ENCODE measurements at regions of chr9 and their contacts with region 1.

Region 1: DNA sequence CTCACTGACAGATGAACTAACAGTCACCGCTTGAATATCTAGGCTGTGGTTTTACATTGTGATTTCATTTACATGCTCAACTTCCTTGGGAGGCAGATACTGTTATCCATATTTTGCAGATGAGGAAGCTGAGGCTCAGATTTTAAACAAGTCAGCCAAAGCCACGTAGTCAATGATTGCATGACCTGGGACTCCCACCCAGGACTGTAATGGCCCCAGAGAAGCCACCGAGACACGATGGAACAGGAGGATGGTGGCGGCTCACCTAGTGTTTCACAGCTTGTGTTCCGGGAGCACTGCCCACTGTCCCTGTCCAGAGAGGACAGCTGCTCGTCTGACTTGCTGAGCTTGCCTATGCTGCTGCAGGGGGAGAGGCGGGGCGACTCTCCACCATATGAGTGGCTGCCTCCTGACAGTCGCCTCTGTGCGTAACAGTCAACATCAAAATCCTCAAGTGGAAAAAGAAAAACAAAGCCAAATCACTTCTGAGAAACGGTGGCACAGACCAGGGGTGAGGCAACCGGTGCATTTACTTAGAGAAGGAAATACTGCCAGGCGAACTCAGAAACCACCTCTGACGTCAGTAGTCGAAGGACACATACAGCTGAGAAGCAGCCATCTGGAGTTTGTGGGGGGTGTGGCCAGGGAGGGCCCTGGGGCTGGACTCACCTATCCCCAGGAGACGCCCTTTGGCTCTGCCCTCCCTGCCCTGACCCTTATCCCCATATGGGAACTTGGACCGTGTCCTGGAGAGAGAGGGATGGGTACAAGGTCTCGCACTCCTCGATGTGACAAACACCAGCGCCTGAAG is 82.5 kb downstream of the PRRT1B start:
- DNase-seq: peak; percentile 93
- ATAC-seq: peak; percentile 84
- H3K4me3 Mint-ChIP-seq: peak overlapping the region; percentile 53
- H3K27ac Mint-ChIP-seq: peak overlapping the region; percentile 91
- H3K4me1 Mint-ChIP-seq: peaks cover 82% of the 10 kb centered on the region
- H3K27me3 Mint-ChIP-seq: no peaks in the 10 kb centered on the region

Region 2: GRCh38 chr9:131645078-131645776 is 17.4 kb after region 1 on chr9:
- CTCF ChIA-PET with region 1: interaction called, 24 read pairs
- DNase-seq: peak; percentile 58
- ATAC-seq: peak; percentile 53
- H3K4me3 Mint-ChIP-seq: no peak overlapping the region
- H3K27ac Mint-ChIP-seq: peak overlapping the region; percentile 80
- H3K4me1 Mint-ChIP-seq: peaks cover 58% of the 10 kb centered on the region
- H3K27me3 Mint-ChIP-seq: no peaks in the 10 kb centered on the region

Region 3: GRCh38 chr9:131668439-131669268 is 40.8 kb after region 1 on chr9:
- CTCF ChIA-PET with region 1: interaction called, 13 read pairs
- DNase-seq: peak; percentile 82
- ATAC-seq: peak; percentile 68
- H3K4me3 Mint-ChIP-seq: peak overlapping the region; percentile 60
- H3K27ac Mint-ChIP-seq: peak overlapping the region; percentile 99
- H3K4me1 Mint-ChIP-seq: peaks cover 93% of the 10 kb centered on the region
- H3K27me3 Mint-ChIP-seq: no peaks in the 10 kb centered on the region